ENCODE measurements at regions of chr7 and their contacts with region 1.

Region 1: GRCh38 chr7:129163875-129164544 is 19.5 kb downstream of the TSPAN33 start:
- DNase-seq: peak; percentile 61
- ATAC-seq: peak; percentile 69
- H3K4me3 ChIP-seq: no peak overlapping the region
- H3K27ac ChIP-seq: no peak overlapping the region
- H3K4me1 ChIP-seq: no peaks in the 10 kb centered on the region
- H3K27me3 ChIP-seq: no peaks in the 10 kb centered on the region
- CTCF ChIP-seq: peak; percentile 92

Region 2: DNA sequence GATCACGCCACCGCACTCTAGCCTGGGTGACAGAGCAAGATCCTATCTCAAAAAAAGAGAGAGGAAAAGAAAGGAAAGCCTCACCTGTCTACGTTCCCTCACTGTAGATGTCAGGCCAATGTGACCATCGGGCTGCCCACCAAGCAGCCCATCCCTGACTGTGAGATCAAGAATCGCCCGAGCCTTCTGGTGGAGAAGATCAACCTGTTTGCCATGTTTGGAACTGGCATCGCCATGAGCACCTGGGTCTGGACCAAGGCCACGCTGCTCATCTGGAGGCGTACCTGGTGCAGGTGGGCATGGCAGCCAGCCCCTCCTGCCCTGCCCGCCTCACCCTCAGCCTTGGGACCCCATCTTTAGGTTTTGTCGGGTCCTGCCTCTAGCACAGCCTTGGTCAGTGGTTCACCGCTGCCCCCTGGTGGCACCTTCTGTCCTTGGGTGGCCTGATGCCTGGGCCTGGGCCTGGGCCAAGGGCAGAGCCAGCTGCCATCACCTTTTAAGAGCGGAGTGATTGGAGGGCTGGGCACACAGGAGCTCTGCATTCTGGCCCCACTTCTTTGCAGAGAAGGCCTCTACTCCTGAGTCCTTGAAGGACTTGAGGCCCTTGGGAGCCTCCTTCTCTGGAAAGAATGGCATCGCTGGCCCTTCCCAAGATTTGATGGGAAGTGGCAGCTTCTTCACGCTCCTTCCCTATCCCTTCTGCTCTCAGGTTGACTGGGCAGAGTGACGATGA is 46.4 kb after region 1 on chr7:
- CTCF ChIA-PET with region 1: interaction called, 26 read pairs
- POLR2A ChIA-PET with region 1: no interaction called
- intact Hi-C with region 1: loop called (anchors 1 kb)
- DNase-seq: peak; percentile 62
- ATAC-seq: peak; percentile 91
- H3K4me3 ChIP-seq: no peak overlapping the region
- H3K27ac ChIP-seq: no peak overlapping the region
- H3K4me1 ChIP-seq: no peaks in the 10 kb centered on the region
- H3K27me3 ChIP-seq: no peaks in the 10 kb centered on the region
- CTCF ChIP-seq: peak; percentile 83

Region 3: GRCh38 chr7:129804890-129805719 is 641.1 kb after region 1 on chr7:
- CTCF ChIA-PET with region 1: interaction called, 17 read pairs
- POLR2A ChIA-PET with region 1: no interaction called
- intact Hi-C with region 1: no loop called
- DNase-seq: no peak
- ATAC-seq: peak; percentile 31; the same call in 1 of the 2 replicates
- H3K4me3 ChIP-seq: no peak overlapping the region
- H3K27ac ChIP-seq: no peak overlapping the region
- H3K4me1 ChIP-seq: no peaks in the 10 kb centered on the region
- H3K27me3 ChIP-seq: no peaks in the 10 kb centered on the region
- CTCF ChIP-seq: no peak